Naive thymus-derived CD4-positive, alpha-beta T cell (primary cell): ENCODE measurements at regions of chr6 and their contacts with region 1.

Region 1: GRCh38 chr6:27479319-27480182 is 6.6 kb upstream of the ZNF184 start:
- DNase-seq: peak; percentile 84 to 97 (median 95)
- ATAC-seq: peak; percentile 83
- H3K4me3 ChIP-seq: peak overlapping the region; percentile 95
- H3K4me3 Mint-ChIP-seq: no peak overlapping the region
- H3K27ac ChIP-seq: peak overlapping the region; percentile 97
- H3K27ac Mint-ChIP-seq: no peak overlapping the region
- H3K4me1 ChIP-seq: peaks cover 9 to 12% of the 10 kb centered on the region in 2 donors
- H3K4me1 Mint-ChIP-seq: peaks cover 0 to 9% (median 5%) of the 10 kb centered on the region in 7 donors
- H3K27me3 ChIP-seq: no peaks in the 10 kb centered on the region
- H3K27me3 Mint-ChIP-seq: peaks cover 0 to 17% (median 0%) of the 10 kb centered on the region in 5 donors

Region 2: DNA sequence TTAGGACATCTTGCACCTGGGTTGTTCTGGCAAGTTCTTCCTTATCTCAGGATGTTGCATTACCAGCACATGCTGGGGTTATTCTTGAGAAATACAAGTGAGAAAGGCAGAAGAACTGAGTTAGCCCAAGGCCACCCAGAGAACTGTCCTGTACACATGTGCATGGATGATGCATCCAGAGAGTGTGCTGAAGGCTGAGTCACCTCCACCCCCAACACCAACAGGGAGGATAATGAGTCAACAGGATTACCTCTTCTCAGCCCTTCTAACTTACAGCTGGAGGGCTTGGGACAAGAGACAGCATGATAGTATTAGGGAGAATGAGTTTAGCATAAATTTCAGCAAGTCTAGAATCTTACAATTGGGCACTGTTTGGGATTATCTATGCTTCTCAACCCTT is 1819.0 kb before region 1 on chr6:
- CTCF ChIA-PET with region 1: no interaction called
- POLR2A ChIA-PET with region 1: no interaction called
- intact Hi-C with region 1: no loop called
- DNase-seq: no peak
- ATAC-seq: no peak
- H3K4me3 ChIP-seq: no peak overlapping the region
- H3K4me3 Mint-ChIP-seq: no peak overlapping the region
- H3K27ac ChIP-seq: no peak overlapping the region
- H3K27ac Mint-ChIP-seq: no peak overlapping the region
- H3K4me1 ChIP-seq: no peaks in the 10 kb centered on the region
- H3K4me1 Mint-ChIP-seq: no peaks in the 10 kb centered on the region
- H3K27me3 ChIP-seq: no peaks in the 10 kb centered on the region
- H3K27me3 Mint-ChIP-seq: peaks cover 32 to 52% (median 43%) of the 10 kb centered on the region in 5 donors

Region 3: DNA sequence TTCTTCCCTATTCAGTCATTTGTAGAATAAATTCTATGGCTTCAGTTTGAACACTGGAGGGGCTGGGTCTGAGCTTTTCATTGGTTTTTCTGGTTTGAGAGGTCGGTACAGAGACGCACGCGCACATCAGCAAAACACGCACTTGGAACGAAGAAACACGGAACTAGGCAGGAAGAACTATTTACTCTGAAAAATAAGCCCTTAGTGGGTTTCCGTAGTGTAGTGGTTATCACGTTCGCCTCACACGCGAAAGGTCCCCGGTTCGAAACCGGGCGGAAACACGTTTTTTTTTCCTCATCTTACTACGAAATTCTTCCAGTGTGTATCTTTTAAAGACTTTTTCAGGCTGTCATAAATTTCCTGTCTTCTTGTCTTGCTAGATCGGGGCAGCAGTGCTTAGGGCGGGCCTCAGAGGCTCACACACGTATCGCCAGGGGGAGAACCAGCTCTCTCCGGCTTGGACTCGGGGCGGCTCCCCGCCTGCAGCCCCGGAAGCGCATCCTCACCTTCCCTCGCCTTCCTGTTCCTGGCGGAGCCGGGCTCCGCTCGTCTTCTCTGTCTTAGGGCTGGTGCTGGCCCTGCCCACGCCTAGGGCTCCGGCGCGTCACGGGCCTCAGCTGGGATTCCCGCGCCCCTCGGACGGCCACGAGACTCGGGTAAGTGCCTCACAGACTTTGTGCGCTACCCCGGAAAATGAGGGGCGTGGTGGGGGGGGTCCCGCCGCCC is 941.5 kb before region 1 on chr6 and contains the start of gene HMGN4:
- CTCF ChIA-PET with region 1: no interaction called
- POLR2A ChIA-PET with region 1: interaction called, 4 read pairs
- intact Hi-C with region 1: loop called in 1 of 2 experiments (anchors 5 kb)
- DNase-seq: peak; percentile 64 to 97 (median 95)
- ATAC-seq: peak; percentile 79
- H3K4me3 ChIP-seq: peak within 1 kb of the TSS; percentile 76
- H3K4me3 Mint-ChIP-seq: peak within 1 kb of the TSS; percentile 88 to 99 (median 94)
- H3K27ac ChIP-seq: peak within 1 kb of the TSS; percentile 88
- H3K27ac Mint-ChIP-seq: peak within 1 kb of the TSS; percentile 91 to 99 (median 98)
- H3K4me1 ChIP-seq: peaks cover 20 to 23% of the 10 kb centered on the region in 2 donors
- H3K4me1 Mint-ChIP-seq: peaks cover 46 to 72% (median 60%) of the 10 kb centered on the region in 7 donors
- H3K27me3 ChIP-seq: no peaks in the 10 kb centered on the region
- H3K27me3 Mint-ChIP-seq: peaks cover 0 to 5% (median 0%) of the 10 kb centered on the region in 5 donors
- total RNA-seq, gene HMGN4: 37.6 to 96.0 (median 81.7) TPM

Region 4: DNA sequence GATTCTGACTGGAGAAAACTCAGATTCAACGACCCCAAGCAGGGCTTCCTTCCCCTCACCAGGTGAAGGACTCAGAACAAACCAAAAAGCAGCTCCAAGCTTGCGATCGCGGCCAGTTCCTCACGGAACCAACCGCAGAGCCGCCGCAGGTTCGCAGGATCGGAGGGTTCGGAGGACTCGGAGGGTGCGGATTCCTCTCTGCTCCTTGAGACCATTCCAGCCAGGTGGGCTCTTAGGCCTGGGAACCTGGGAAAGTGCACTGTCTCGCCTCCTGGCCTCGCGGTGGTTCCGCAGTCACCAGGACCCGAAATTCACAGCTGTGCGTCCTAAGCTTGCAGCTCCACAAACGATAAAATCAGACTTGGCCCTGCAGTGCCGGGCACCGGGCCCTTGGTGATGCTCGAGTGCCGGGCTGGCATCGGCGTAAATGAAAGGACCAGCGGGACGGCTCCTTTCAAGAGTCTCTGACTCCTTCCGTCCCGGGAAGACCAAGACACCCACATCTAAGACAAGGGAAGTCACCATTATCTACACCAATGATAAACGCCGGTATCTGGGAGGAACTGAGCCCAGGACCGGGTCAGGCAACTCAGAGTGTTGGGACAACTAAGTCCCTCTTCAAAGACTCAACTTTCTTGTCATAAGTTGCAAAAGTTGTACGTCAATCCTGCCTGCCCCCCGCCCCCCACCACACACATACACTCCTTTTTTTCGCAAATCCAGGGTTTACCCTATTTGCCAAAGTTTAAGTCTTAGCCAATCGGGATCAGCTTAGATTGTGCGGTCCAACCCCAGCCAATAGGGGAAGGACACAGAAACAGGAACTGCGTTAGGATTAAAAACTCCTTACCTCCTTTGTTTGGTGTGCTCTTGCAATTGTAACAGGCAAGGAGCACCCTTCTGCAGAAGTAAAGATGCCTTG is 301.8 kb before region 1 on chr6:
- CTCF ChIA-PET with region 1: interaction called, 4 read pairs
- POLR2A ChIA-PET with region 1: interaction called, 22 read pairs
- intact Hi-C with region 1: loop called (anchors 1 to 2 kb)
- DNase-seq: peak; percentile 49 to 78 (median 66)
- ATAC-seq: peak; percentile 83
- H3K4me3 ChIP-seq: peak overlapping the region; percentile 99
- H3K4me3 Mint-ChIP-seq: peak overlapping the region; percentile 90 to 98 (median 96)
- H3K27ac ChIP-seq: peak overlapping the region; percentile 74
- H3K27ac Mint-ChIP-seq: peak overlapping the region; percentile 79 to 100 (median 95)
- H3K4me1 ChIP-seq: peaks cover 0 to 3% of the 10 kb centered on the region in 2 donors
- H3K4me1 Mint-ChIP-seq: peaks cover 0 to 33% (median 14%) of the 10 kb centered on the region in 7 donors
- H3K27me3 ChIP-seq: no peaks in the 10 kb centered on the region
- H3K27me3 Mint-ChIP-seq: peaks cover 0 to 37% (median 0%) of the 10 kb centered on the region in 5 donors

Region 5: DNA sequence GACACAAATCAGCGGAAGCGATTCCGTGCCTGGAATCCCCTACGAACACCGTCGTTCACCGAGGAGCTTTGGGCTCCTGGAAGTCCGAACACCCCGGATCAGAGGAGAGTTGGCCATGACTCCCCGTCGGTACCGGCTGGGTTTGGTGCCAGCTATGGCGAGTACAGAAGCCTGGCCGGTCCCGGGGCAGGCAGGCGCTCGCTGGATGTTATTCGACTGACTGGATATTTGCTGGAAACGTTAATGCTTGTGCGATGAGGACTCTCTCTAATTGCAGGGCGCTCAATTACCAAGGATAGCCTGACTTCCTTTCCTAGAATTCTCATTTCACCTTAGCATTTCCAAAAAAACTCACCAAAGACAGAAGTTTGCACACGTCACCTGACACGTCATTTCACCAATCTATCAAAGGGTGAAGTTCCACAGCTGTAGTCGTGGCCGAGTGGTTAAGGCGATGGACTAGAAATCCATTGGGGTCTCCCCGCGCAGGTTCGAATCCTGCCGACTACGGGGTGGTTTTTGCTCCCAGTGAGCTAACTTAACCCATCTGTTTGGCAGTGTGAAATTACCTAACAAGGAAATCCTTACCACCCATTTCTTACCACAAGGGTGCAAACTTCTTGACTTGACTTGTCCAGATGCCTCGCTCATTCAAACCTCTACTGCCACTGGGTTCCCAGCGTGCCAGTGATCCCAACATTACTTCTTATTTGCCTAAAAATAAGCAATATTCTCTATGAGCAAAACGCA is 16.0 kb after region 1 on chr6:
- CTCF ChIA-PET with region 1: interaction called, 3 read pairs
- POLR2A ChIA-PET with region 1: interaction called, 5 read pairs
- intact Hi-C with region 1: loop called in 1 of 2 experiments (anchors 2 kb)
- DNase-seq: peak in 2 of 9 donors; percentile 8 to 73
- ATAC-seq: no peak
- H3K4me3 ChIP-seq: peak overlapping the region; percentile 14
- H3K4me3 Mint-ChIP-seq: peak overlapping the region; percentile 39 to 80 (median 61)
- H3K27ac ChIP-seq: no peak overlapping the region
- H3K27ac Mint-ChIP-seq: peak overlapping the region in 2 of 9 donors; percentile 13 to 59
- H3K4me1 ChIP-seq: peaks cover 0 to 8% of the 10 kb centered on the region in 2 donors
- H3K4me1 Mint-ChIP-seq: peaks cover 11 to 20% (median 19%) of the 10 kb centered on the region in 7 donors
- H3K27me3 ChIP-seq: peaks cover 10 to 30% of the 10 kb centered on the region in 2 donors
- H3K27me3 Mint-ChIP-seq: peaks cover 47 to 66% (median 63%) of the 10 kb centered on the region in 5 donors

Region 6: GRCh38 chr6:27838058-27838944 is 358.8 kb after region 1 on chr6:
- CTCF ChIA-PET with region 1: no interaction called
- POLR2A ChIA-PET with region 1: interaction called, 23 read pairs
- intact Hi-C with region 1: no loop called
- DNase-seq: peak; percentile 65 to 96 (median 93)
- ATAC-seq: peak; percentile 86
- H3K4me3 ChIP-seq: peak overlapping the region; percentile 87
- H3K4me3 Mint-ChIP-seq: no peak overlapping the region
- H3K27ac ChIP-seq: peak overlapping the region; percentile 93
- H3K27ac Mint-ChIP-seq: no peak overlapping the region
- H3K4me1 ChIP-seq: peaks cover 22 to 34% of the 10 kb centered on the region in 2 donors
- H3K4me1 Mint-ChIP-seq: peaks cover 7 to 39% (median 29%) of the 10 kb centered on the region in 7 donors
- H3K27me3 ChIP-seq: no peaks in the 10 kb centered on the region
- H3K27me3 Mint-ChIP-seq: peaks cover 0 to 14% (median 7%) of the 10 kb centered on the region in 5 donors

Region 7: DNA sequence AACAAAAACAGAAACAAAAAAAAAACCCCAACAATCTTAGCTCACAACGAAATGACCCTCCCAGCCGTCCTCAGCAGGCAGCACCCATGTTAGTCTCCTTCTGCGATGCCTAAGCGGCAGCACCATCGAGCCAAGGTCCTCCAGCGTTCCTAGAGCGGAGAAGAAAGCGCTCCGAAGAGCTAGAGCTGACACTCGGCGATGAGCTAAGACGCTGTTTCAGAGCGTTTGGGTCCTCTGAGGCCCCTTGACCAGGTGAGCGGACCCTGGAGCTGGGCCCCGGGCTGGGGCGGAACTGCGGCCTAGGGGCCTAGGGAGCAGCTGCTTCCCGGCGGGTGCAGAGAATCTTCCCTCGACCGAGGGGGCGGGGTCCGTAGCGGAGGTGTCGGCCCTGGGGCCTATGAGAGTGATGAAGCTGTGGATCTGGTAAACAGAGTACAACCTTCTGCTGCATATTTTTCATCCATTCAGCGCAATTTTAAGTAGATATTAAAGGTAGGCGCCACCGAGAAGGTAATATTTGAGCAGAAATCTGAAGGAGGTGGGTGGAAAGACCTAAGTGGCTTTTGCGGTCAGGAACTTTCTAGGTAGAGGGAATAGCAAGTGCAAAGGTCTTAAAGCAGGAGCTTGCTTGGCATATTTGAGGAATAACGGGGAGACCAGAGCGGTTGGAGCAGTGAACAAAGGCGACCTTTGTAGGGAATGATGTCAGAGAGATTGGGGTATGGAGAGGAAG is 787.6 kb after region 1 on chr6 and contains the start of gene ZSCAN26:
- CTCF ChIA-PET with region 1: no interaction called
- POLR2A ChIA-PET with region 1: no interaction called
- intact Hi-C with region 1: loop called in 1 of 2 experiments (anchors 1 kb)
- DNase-seq: peak; percentile 67 to 91 (median 87)
- ATAC-seq: peak; percentile 96
- H3K4me3 ChIP-seq: peak within 1 kb of the TSS; percentile 96
- H3K4me3 Mint-ChIP-seq: peak within 1 kb of the TSS in 1 of 10 donors; percentile 30
- H3K27ac ChIP-seq: peak within 1 kb of the TSS; percentile 91
- H3K27ac Mint-ChIP-seq: peak within 1 kb of the TSS in 1 of 9 donors; percentile 48
- H3K4me1 ChIP-seq: peaks cover 0 to 24% of the 10 kb centered on the region in 2 donors
- H3K4me1 Mint-ChIP-seq: peaks cover 6 to 37% (median 24%) of the 10 kb centered on the region in 7 donors
- H3K27me3 ChIP-seq: no peaks in the 10 kb centered on the region
- H3K27me3 Mint-ChIP-seq: peaks cover 0 to 7% (median 0%) of the 10 kb centered on the region in 5 donors
- total RNA-seq, gene ZSCAN26: 8.0 to 27.8 (median 12.5) TPM

Region 8: GRCh38 chr6:28523241-28523622 is 1043.7 kb after region 1 on chr6:
- CTCF ChIA-PET with region 1: no interaction called
- POLR2A ChIA-PET with region 1: no interaction called
- intact Hi-C with region 1: no loop called
- DNase-seq: peak in 7 of 9 donors; percentile 40 to 59 (median 53)
- ATAC-seq: peak; percentile 95
- H3K4me3 ChIP-seq: no peak overlapping the region
- H3K4me3 Mint-ChIP-seq: peak overlapping the region; percentile 13 to 77 (median 67)
- H3K27ac ChIP-seq: no peak overlapping the region
- H3K27ac Mint-ChIP-seq: peak overlapping the region in 4 of 9 donors; percentile 24 to 79 (median 59)
- H3K4me1 ChIP-seq: peaks cover 0 to 25% of the 10 kb centered on the region in 2 donors
- H3K4me1 Mint-ChIP-seq: peaks cover 10 to 40% (median 30%) of the 10 kb centered on the region in 7 donors
- H3K27me3 ChIP-seq: no peaks in the 10 kb centered on the region
- H3K27me3 Mint-ChIP-seq: peaks cover 0 to 66% (median 47%) of the 10 kb centered on the region in 5 donors